Sigmoid colon (tissue), 7 donors: ENCODE measurements at regions of chr7 and their contacts with region 1.

Region 1: GRCh38 chr7:22822486-22823141 is at the start of gene TOMM7:
- DNase-seq: peak; percentile 96
- H3K4me3 ChIP-seq: peak within 1 kb of the TSS; percentile 67 to 87 (median 78)
- H3K27ac ChIP-seq: peak within 1 kb of the TSS; percentile 81 to 86 (median 84)
- H3K4me1 ChIP-seq: peaks cover 0 to 37% (median 26%) of the 10 kb centered on the region in 4 donors
- H3K27me3 ChIP-seq: no peaks in the 10 kb centered on the region
- CTCF ChIP-seq: peak in 3 of 4 experiments; percentile 12 to 44 (median 28)
- EP300 ChIP-seq: no peak
- POLR2A ChIP-seq: peak; percentile 43 to 83
- total RNA-seq, gene TOMM7: 148 to 341 (median 277) TPM

Region 2: DNA sequence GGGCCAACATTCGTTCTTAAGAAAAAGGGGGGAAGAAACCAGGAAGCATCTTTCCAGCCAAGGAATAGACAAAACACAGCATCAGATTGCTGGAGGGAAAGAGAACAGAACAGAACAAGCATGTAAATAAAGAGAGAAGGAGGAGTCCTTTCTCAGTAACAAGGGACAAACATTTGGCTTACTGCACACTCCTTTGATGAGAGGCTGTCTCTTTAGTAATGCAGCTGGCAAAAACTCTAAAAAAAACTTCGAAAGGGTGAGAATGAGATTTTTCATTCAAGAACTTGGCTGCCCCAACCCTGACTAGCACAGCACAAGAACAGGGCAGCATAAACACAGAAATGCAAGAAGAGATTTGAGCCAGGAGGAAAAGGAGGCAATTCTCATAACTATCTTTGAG is 134.5 kb before region 1 on chr7:
- intact Hi-C with region 1: no loop called
- DNase-seq: no peak
- H3K4me3 ChIP-seq: no peak overlapping the region
- H3K27ac ChIP-seq: no peak overlapping the region
- H3K4me1 ChIP-seq: peaks cover 0 to 10% (median 0%) of the 10 kb centered on the region in 4 donors
- H3K27me3 ChIP-seq: no peaks in the 10 kb centered on the region
- CTCF ChIP-seq: no peak
- EP300 ChIP-seq: no peak
- POLR2A ChIP-seq: no peak

Region 3: DNA sequence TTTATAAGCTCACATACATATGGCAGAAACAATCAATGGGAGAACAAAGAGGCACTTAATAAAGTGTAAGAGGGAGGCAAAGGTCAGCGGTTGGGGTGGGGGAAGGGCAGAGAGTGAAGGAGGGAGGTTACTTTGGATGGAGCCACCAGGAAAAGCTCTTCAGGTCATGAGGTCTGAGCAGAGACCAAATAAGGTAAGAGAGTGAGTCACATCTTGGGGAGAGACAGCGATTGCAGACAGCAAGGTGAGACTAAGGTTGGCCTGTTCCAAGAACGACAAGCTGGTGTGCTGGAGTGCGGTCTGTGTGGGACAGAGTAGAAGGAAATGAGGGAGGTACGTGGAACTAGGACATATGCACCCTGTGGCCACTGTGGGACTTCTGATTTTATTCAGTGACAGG is 74.3 kb after region 1 on chr7:
- intact Hi-C with region 1: no loop called
- DNase-seq: no peak
- H3K4me3 ChIP-seq: no peak overlapping the region
- H3K27ac ChIP-seq: no peak overlapping the region
- H3K4me1 ChIP-seq: no peaks in the 10 kb centered on the region
- H3K27me3 ChIP-seq: no peaks in the 10 kb centered on the region
- CTCF ChIP-seq: no peak
- EP300 ChIP-seq: no peak
- POLR2A ChIP-seq: no peak

Region 4: DNA sequence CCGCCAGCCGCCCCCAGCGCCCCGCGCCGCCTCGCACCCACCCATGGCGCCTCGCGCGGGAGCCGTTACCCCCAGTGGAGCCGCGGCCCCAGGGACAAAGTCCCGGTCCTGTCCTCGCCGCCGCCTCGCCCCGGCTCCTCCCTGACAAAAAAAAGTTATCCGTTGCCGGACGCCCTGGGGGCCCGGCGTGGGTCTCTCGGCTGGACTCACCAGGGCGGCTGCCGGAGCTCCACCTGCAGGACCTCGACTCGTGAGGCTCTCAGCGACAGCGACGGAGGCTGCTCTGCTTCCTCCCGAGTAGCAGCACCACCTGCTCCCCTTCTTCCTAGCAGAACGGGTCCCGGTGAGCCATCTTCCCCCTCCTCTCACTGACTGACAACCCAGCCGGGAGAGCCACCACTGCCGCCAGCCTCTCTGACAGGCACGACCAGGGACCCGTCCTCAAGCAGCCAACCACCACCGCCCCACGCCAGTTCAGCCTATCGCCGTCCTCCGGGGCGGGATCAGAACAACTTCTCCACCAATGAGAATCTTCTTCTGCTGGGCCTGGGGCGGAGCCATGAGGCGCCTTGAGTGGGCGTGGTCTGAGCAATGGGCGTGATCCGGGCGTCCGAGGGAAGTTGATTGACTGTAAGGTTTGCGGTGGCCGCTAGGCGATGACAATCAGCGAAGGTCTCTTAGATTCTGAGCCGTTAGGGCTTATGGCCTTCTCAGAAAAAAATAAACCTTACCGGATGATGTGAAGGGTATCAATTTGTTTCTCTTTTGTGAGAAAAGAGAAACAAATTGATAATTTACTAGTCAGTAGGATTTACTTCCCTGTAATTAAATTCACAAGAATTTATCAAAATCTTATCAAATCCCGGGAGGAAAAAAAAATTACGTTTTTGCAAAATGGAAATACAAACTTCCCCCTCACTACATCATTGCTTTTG is 191.4 kb after region 1 on chr7 and contains the start of gene HYCC1:
- intact Hi-C with region 1: loop called (anchors 2 kb)
- DNase-seq: peak; percentile 100
- H3K4me3 ChIP-seq: peak within 1 kb of the TSS; percentile 84 to 88 (median 86)
- H3K27ac ChIP-seq: peak within 1 kb of the TSS; percentile 82 to 90 (median 84)
- H3K4me1 ChIP-seq: peaks cover 0 to 25% (median 17%) of the 10 kb centered on the region in 4 donors
- H3K27me3 ChIP-seq: no peaks in the 10 kb centered on the region
- CTCF ChIP-seq: peak; percentile 47 to 68 (median 62)
- EP300 ChIP-seq: no peak
- POLR2A ChIP-seq: peak; percentile 88 to 92
- total RNA-seq, gene HYCC1: 28.8 to 49.9 (median 35.0) TPM

Region 5: GRCh38 chr7:23055582-23056178 is 233.1 kb after region 1 on chr7:
- intact Hi-C with region 1: loop called (anchors 1 kb)
- DNase-seq: no peak
- H3K4me3 ChIP-seq: no peak overlapping the region
- H3K27ac ChIP-seq: no peak overlapping the region
- H3K4me1 ChIP-seq: peaks cover 0 to 4% (median 0%) of the 10 kb centered on the region in 4 donors
- H3K27me3 ChIP-seq: no peaks in the 10 kb centered on the region
- CTCF ChIP-seq: peak; percentile 52 to 85 (median 72)
- EP300 ChIP-seq: no peak
- POLR2A ChIP-seq: no peak

Region 6: GRCh38 chr7:23105644-23106056 is 283.0 kb after region 1 on chr7 and contains the start of gene KLHL7:
- intact Hi-C with region 1: loop called (anchors 2 kb)
- DNase-seq: peak; percentile 98
- H3K4me3 ChIP-seq: peak within 1 kb of the TSS; percentile 64 to 97 (median 90)
- H3K27ac ChIP-seq: peak within 1 kb of the TSS; percentile 87 to 99 (median 96)
- H3K4me1 ChIP-seq: peaks cover 0 to 37% (median 28%) of the 10 kb centered on the region in 4 donors
- H3K27me3 ChIP-seq: no peaks in the 10 kb centered on the region
- CTCF ChIP-seq: no peak
- EP300 ChIP-seq: no peak
- POLR2A ChIP-seq: peak; percentile 84 to 93
- total RNA-seq, gene KLHL7: 26.9 to 42.5 (median 28.4) TPM